ENCODE measurements at regions of chr17 and their contacts with region 1.

Region 1: DNA sequence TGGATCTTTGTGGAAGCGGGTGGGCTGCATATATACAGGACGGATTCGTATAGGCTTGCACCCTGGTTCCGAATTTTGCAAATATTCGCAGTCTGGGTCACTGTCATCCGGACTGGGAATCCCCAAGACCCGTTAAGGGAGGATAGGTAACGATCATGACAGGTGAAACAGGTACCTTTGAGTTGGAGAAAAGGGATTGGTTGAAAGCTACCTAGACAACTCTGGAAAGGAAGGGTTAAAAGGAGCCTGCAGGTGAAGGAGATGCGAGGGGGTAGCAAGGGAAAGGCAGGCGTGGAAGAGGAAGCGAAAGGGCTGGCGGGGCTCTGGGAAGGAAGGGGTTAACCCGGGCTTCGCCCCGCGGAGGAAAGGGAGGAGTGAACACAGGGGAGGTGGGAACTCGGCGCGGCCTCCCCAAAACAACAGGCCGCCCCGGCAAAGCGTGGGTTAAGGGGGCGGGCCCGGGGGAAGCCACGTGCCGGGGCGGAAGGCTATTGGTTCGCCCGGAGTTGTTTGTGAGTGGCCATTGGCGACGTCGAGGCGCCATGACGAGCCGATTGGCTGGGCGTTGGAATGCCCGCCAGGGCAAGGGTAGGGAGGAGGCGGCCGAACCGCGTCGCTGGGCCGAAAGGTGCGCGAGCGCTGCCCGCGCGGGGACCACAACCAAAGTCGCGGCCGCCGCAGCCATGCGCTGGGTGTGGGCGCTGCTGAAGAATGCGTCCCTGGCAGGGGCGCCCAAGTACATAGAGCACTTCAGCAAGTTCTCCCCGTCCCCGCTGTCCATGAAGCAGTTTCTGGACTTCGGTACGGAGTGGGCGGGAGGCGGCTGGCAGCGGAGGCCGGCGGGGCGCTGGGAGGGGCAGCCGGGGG is at the start of gene PDK2:
- DNase-seq: peak; percentile 95
- ATAC-seq: peak; percentile 93
- H3K4me3 Mint-ChIP-seq: peak within 1 kb of the TSS; percentile 97
- H3K27ac Mint-ChIP-seq: peak within 1 kb of the TSS; percentile 41
- H3K4me1 Mint-ChIP-seq: peaks cover 6% of the 10 kb centered on the region
- H3K27me3 Mint-ChIP-seq: no peaks in the 10 kb centered on the region
- CTCF ChIP-seq: no peak
- total RNA-seq, gene PDK2: 16.6 to 21.3 TPM (median 19.8 TPM) in 3 replicates

Region 2: DNA sequence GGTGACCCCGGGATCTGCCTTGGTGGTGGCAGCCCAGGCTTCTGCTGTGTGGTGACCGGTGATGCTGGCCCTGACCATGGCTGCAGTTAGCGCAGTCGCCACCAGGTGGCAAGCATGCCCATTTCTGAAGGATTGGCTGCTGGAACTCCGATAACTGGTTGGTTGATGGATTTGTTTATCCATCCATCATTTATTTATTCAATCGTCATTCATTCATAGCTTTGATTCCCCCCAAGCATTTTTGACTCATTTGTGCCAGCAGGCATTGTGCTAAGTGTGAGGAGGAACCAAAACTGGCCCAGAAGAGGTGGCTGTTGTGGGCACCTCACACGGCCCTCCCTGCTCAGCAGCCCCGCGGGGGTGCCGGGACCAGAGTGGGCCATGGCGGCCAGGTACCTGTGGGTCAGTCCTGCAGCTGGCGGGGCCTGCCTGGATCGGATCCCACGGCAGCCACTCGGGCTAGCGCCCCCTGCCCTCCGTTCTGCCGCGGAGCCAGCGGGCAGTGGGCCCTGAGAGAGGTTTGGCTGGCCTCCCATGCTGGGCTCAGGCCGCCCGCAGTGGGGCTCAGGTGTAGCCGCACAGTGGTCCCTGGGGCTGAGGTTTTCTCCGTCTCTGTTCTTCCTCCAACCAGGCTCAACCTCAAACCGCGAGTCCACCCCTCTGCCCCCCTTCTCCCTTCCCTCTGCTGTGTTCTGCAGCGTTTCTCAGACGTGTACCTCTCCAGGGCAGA is 67.9 kb before region 1 on chr17:
- CTCF ChIA-PET with region 1: interaction called, 46 read pairs
- POLR2A ChIA-PET with region 1: no interaction called
- DNase-seq: peak; percentile 92
- ATAC-seq: peak; percentile 67
- H3K4me3 Mint-ChIP-seq: peak overlapping the region; percentile 53
- H3K27ac Mint-ChIP-seq: no peak overlapping the region
- H3K4me1 Mint-ChIP-seq: peaks cover 25% of the 10 kb centered on the region
- H3K27me3 Mint-ChIP-seq: peaks cover 11% of the 10 kb centered on the region
- CTCF ChIP-seq: peak; percentile 92

Region 3: DNA sequence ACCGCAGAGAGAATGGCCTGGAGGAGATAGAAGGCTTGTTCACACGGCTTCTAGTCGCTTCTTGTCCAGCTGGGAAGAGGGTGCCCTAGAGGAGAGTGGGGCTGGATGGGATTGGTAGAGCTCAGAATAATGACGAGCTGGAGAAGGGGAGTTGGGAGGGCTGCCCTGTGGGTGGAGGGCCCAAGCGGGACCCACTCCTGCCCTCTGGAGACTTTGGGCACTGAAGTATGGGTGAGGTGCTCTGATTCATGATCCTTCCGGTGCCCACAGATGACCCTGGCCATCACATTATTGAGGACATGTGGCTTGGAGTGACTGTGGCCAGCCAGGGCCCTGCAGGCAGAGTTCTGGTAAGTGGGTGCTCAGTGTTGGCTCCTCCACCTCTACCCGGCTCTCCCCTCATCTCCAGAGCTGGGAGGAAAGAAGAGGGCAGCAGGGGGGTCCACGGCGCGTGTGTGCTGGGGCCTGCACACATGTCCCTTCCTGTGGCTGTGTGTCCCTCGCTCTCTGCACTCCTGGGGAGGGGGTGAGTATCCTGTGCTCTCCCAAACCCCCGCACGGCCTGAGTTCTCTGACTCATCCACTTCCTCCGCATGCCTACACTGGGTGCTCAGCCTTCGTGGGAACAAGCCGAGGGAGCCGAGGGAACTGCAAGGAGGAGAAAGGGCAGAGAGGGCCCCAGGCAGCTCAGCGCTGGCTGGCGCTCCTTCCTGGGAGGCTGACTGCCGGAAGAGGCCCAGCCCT is 30.6 kb before region 1 on chr17:
- CTCF ChIA-PET with region 1: interaction called, 16 read pairs
- POLR2A ChIA-PET with region 1: interaction called, 3 read pairs
- DNase-seq: no peak
- ATAC-seq: peak; percentile 61
- H3K4me3 Mint-ChIP-seq: no peak overlapping the region
- H3K27ac Mint-ChIP-seq: peak overlapping the region; percentile 27; the same call in 1 of the 2 replicates
- H3K4me1 Mint-ChIP-seq: peaks cover 5% of the 10 kb centered on the region
- H3K27me3 Mint-ChIP-seq: no peaks in the 10 kb centered on the region
- CTCF ChIP-seq: no peak

Region 4: DNA sequence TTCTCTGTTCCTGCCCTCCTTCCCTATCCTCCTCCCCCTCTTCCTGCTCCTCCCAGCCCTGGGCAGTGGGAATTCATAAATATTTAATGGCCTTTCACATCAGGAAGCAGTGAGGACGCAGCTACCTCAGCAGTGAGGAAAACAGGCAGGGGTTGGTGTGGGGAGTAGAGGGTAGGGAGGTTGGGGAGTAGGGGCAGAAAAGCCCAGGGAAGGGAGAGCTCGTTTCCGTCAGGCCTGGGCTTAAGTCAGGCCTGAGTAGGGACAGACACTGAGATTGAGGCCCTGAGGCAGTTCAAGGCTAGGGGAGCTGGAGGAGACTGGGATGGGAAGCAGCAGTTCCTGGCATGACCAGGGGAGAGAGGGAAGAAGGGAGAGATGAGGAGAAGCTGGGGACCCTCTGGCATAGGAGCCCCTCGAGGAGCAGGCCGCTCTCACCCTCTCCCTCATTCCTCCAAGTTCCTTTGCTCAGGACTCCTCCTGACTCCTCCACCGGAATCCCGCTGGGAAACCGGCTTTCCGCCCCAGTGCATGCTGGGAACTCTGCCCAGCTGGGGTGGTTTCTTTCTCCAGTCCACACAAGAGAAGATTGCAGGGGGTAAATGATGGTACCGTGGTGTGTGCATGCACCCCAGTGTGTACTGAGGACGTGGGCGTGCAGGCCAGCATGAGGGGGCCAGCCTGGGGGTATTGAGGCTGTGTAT is 28.8 kb after region 1 on chr17:
- CTCF ChIA-PET with region 1: interaction called, 26 read pairs
- POLR2A ChIA-PET with region 1: no interaction called
- DNase-seq: no peak
- ATAC-seq: peak; percentile 70
- H3K4me3 Mint-ChIP-seq: peak overlapping the region; percentile 11; the same call in 1 of the 2 replicates
- H3K27ac Mint-ChIP-seq: peak overlapping the region; percentile 66
- H3K4me1 Mint-ChIP-seq: peaks cover 39% of the 10 kb centered on the region
- H3K27me3 Mint-ChIP-seq: peaks cover 38% of the 10 kb centered on the region
- CTCF ChIP-seq: no peak

Region 5: GRCh38 chr17:50151041-50151936 is 56.3 kb after region 1 on chr17:
- CTCF ChIA-PET with region 1: interaction called, 34 read pairs
- POLR2A ChIA-PET with region 1: interaction called, 3 read pairs
- DNase-seq: peak; percentile 92
- ATAC-seq: peak; percentile 58
- H3K4me3 Mint-ChIP-seq: peak overlapping the region; percentile 75
- H3K27ac Mint-ChIP-seq: peak overlapping the region; percentile 95
- H3K4me1 Mint-ChIP-seq: peaks cover 38% of the 10 kb centered on the region
- H3K27me3 Mint-ChIP-seq: peaks cover 19% of the 10 kb centered on the region
- CTCF ChIP-seq: no peak

Region 6: GRCh38 chr17:50177983-50178834 is 83.2 kb after region 1 on chr17:
- CTCF ChIA-PET with region 1: interaction called, 11 read pairs
- POLR2A ChIA-PET with region 1: no interaction called
- DNase-seq: peak; percentile 68
- ATAC-seq: peak; percentile 76
- H3K4me3 Mint-ChIP-seq: peak overlapping the region; percentile 56
- H3K27ac Mint-ChIP-seq: peak overlapping the region; percentile 37; the same call in 1 of the 2 replicates
- H3K4me1 Mint-ChIP-seq: peaks cover 31% of the 10 kb centered on the region
- H3K27me3 Mint-ChIP-seq: peaks cover 6% of the 10 kb centered on the region; the same call in 1 of the 2 replicates
- CTCF ChIP-seq: no peak

Measured in WTC11 (cell line).